ENCODE measurements at regions of chr15 and their contacts with region 1.

Region 1: GRCh38 chr15:80082310-80082709 is 22.8 kb downstream of the ZFAND6 start:
- DNase-seq: no peak
- ATAC-seq: no peak
- H3K4me3 ChIP-seq: no peak overlapping the region
- H3K4me3 Mint-ChIP-seq: no peak overlapping the region
- H3K27ac ChIP-seq: no peak overlapping the region
- H3K27ac Mint-ChIP-seq: no peak overlapping the region
- H3K4me1 ChIP-seq: no peaks in the 10 kb centered on the region
- H3K4me1 Mint-ChIP-seq: peaks cover 8 to 61% (median 50%) of the 10 kb centered on the region in 7 donors
- H3K27me3 ChIP-seq: no peaks in the 10 kb centered on the region
- H3K27me3 Mint-ChIP-seq: no peaks in the 10 kb centered on the region

Region 2: GRCh38 chr15:80099241-80099640 is 16.9 kb after region 1 on chr15:
- CTCF ChIA-PET with region 1: no interaction called
- POLR2A ChIA-PET with region 1: no interaction called
- intact Hi-C with region 1: loop called in 1 of 2 experiments (anchors 2 kb)
- DNase-seq: no peak
- ATAC-seq: no peak
- H3K4me3 ChIP-seq: no peak overlapping the region
- H3K4me3 Mint-ChIP-seq: no peak overlapping the region
- H3K27ac ChIP-seq: no peak overlapping the region
- H3K27ac Mint-ChIP-seq: no peak overlapping the region
- H3K4me1 ChIP-seq: peaks cover 0 to 4% of the 10 kb centered on the region in 2 donors
- H3K4me1 Mint-ChIP-seq: peaks cover 8 to 52% (median 35%) of the 10 kb centered on the region in 7 donors
- H3K27me3 ChIP-seq: no peaks in the 10 kb centered on the region
- H3K27me3 Mint-ChIP-seq: no peaks in the 10 kb centered on the region

Region 3: DNA sequence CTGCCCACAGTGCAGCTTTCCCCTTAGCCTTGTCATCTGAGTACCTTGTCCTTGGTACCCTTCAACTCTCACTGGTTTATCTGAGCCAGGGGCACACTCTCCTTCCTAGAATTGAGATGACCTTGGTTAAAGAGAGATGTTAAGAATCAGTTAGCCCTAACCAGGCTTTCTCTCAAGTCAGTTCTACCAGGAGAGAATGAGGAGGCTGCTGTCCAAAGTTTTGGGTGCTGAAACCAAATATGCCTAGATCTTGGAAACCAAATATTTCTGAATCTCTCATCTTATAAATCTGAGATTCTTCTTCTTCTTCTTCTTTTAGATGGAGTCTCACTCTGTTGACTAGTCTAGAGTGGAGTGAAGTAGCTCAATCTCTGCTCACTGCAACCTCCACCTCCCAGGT is 181.7 kb after region 1 on chr15:
- CTCF ChIA-PET with region 1: no interaction called
- POLR2A ChIA-PET with region 1: no interaction called
- intact Hi-C with region 1: no loop called
- DNase-seq: no peak
- ATAC-seq: no peak
- H3K4me3 ChIP-seq: no peak overlapping the region
- H3K4me3 Mint-ChIP-seq: no peak overlapping the region
- H3K27ac ChIP-seq: no peak overlapping the region
- H3K27ac Mint-ChIP-seq: no peak overlapping the region
- H3K4me1 ChIP-seq: no peaks in the 10 kb centered on the region
- H3K4me1 Mint-ChIP-seq: no peaks in the 10 kb centered on the region
- H3K27me3 ChIP-seq: no peaks in the 10 kb centered on the region
- H3K27me3 Mint-ChIP-seq: peaks cover 14 to 56% (median 54%) of the 10 kb centered on the region in 5 donors

Measured in naive thymus-derived CD4-positive, alpha-beta T cell (primary cell).